Heart right ventricle (tissue), 16 donors: ENCODE measurements at regions of chr12 and their contacts with region 1.

Region 1: GRCh38 chr12:27549801-27550652 is 26.0 kb downstream of the PPFIBP1 start:
- DNase-seq: peak; percentile 79 to 90
- ATAC-seq: peak; percentile 85 to 93 (median 89)
- H3K4me3 ChIP-seq: peak overlapping the region in 4 of 10 donors; percentile 2 to 30 (median 17)
- H3K27ac ChIP-seq: peak overlapping the region; percentile 65 to 96 (median 83)
- H3K4me1 ChIP-seq: peaks cover 30 to 100% (median 94%) of the 10 kb centered on the region in 9 donors
- H3K27me3 ChIP-seq: no peaks in the 10 kb centered on the region
- CTCF ChIP-seq: peak in 1 of 9 donors; percentile 10

Region 2: DNA sequence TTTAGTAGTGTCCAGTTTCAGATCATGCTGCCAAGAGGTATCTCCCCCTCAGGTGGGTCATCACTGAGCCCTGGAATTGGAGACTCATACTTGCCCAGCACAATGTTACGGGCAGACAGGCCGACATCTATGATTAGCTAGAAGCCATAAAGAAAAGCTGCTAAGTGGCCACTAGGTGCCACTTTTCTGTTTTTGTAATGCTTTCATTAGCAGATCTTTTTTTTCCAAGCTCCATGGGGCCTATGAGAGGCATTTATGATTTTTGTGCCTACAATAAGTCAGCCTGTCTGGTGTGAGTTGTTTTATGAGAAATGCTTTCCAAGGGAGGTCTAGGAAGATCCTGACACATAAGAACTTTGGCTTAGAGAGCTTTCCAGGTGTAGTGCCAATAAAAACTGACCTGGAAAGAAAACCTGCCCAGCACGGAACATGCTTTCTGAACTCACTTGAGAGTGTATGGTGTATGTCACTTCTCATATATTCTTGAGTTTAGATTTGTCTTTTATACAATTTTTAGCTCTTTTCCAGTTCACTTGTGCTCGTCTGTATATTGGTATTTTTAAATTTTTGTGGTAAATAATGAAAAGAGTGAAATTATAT is 125.3 kb before region 1 on chr12:
- intact Hi-C with region 1: no loop called
- DNase-seq: peak in 1 of 2 donors; percentile 41
- ATAC-seq: peak; percentile 70 to 91 (median 84)
- H3K4me3 ChIP-seq: no peak overlapping the region
- H3K27ac ChIP-seq: peak overlapping the region in 5 of 10 donors; percentile 3 to 49 (median 20)
- H3K4me1 ChIP-seq: peaks cover 0 to 20% (median 4%) of the 10 kb centered on the region in 9 donors
- H3K27me3 ChIP-seq: no peaks in the 10 kb centered on the region
- CTCF ChIP-seq: peak; percentile 29 to 75 (median 61)

Region 3: GRCh38 chr12:27583057-27583797 is 33.2 kb after region 1 on chr12:
- intact Hi-C with region 1: loop called in 1 of 10 experiments (anchors 5 kb)
- DNase-seq: peak in 1 of 2 donors; percentile 68
- ATAC-seq: peak; percentile 54 to 82 (median 76)
- H3K4me3 ChIP-seq: no peak overlapping the region
- H3K27ac ChIP-seq: peak overlapping the region; percentile 57 to 89 (median 70)
- H3K4me1 ChIP-seq: peaks cover 25 to 92% (median 82%) of the 10 kb centered on the region in 9 donors
- H3K27me3 ChIP-seq: no peaks in the 10 kb centered on the region
- CTCF ChIP-seq: no peak

Region 4: GRCh38 chr12:27635349-27635972 is 85.4 kb after region 1 on chr12:
- intact Hi-C with region 1: loop called in 1 of 10 experiments (anchors 5 kb)
- DNase-seq: no peak
- ATAC-seq: peak in 1 of 8 donors; percentile 44
- H3K4me3 ChIP-seq: no peak overlapping the region
- H3K27ac ChIP-seq: peak overlapping the region in 2 of 10 donors; percentile 3 to 35
- H3K4me1 ChIP-seq: peaks cover 4 to 60% (median 42%) of the 10 kb centered on the region in 9 donors
- H3K27me3 ChIP-seq: no peaks in the 10 kb centered on the region
- CTCF ChIP-seq: peak; percentile 31 to 75 (median 71)

Region 5: DNA sequence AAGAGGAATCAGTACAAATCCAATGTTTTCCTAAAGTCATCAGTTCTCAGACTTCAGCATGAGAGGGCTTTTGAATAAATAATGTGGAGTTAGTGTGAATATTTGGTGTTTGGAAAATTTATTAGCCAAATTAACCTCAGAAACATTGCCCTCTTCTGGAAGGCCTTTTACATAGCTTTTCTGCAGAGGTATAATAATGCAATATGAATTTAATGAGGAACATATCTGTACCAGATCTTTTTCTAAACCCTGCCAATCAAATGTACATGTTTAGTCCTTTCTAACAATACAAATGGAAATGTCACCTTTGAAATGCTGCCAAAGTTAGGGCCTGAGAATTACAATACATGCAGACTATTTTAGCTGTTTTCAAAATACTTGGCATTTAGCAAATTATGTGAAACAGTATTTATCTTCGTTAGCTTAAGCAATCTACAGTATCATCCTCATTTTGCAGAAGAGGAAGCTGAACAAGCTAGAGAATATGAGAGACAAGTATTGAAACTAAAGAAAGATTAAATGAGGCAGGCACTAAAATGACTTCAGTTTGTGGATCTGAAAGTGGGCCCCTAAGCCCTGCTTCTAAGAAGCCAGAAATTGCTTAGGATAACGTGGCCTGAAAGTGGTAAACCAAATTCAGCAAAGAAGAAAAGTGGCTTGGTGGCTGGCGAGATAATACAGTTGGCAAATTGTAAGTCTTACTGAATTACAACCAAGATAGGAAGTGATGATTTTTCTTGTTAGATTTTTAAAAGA is 290.4 kb after region 1 on chr12:
- intact Hi-C with region 1: no loop called
- DNase-seq: no peak
- ATAC-seq: no peak
- H3K4me3 ChIP-seq: no peak overlapping the region
- H3K27ac ChIP-seq: no peak overlapping the region
- H3K4me1 ChIP-seq: peaks cover 0 to 19% (median 6%) of the 10 kb centered on the region in 9 donors
- H3K27me3 ChIP-seq: no peaks in the 10 kb centered on the region
- CTCF ChIP-seq: peak in 6 of 9 donors; percentile 9 to 35 (median 26)